ENCODE measurements at regions of chr6 and their contacts with region 1.

Region 1: GRCh38 chr6:90478789-90479602 is 107.9 kb downstream of the MAP3K7 start:
- DNase-seq: peak; percentile 90 to 95 (median 91)
- ATAC-seq: peak; percentile 99
- H3K4me3 ChIP-seq: no peak overlapping the region
- H3K27ac ChIP-seq: peak overlapping the region; percentile 35; the same call in 1 of the 3 replicates
- H3K4me1 ChIP-seq: peaks cover 0 to 13% of the 10 kb centered on the region in 2 experiments; a peak in 4 of 5 replicates
- H3K27me3 ChIP-seq: no peaks in the 10 kb centered on the region; a peak in 1 of 5 replicates
- CTCF ChIP-seq: peak; percentile 86 to 95 (median 92)
- EP300 ChIP-seq: peak; percentile 50; the same call in 1 of the 2 replicates
- POLR2A ChIP-seq: no peak
- RAD21 ChIP-seq: peak; percentile 99

Region 2: GRCh38 chr6:89940225-89941027 is 538.6 kb before region 1 on chr6:
- CTCF ChIA-PET with region 1: interaction called, 6 read pairs
- POLR2A ChIA-PET with region 1: interaction called, 3 read pairs
- in situ Hi-C with region 1: loop called (anchors 5 kb)
- intact Hi-C with region 1: loop called (anchors 1 kb)
- DNase-seq: peak; percentile 54 to 79 (median 64)
- ATAC-seq: peak; percentile 99
- H3K4me3 ChIP-seq: no peak overlapping the region
- H3K27ac ChIP-seq: no peak overlapping the region
- H3K4me1 ChIP-seq: no peaks in the 10 kb centered on the region
- H3K27me3 ChIP-seq: peaks cover 0 to 13% of the 10 kb centered on the region in 2 experiments; a peak in 1 of 5 replicates
- CTCF ChIP-seq: peak; percentile 77 to 86 (median 82)
- EP300 ChIP-seq: 0 out of 2 replicates have a peak, but pooled peaks have one; percentile 16
- POLR2A ChIP-seq: no peak
- RAD21 ChIP-seq: peak; percentile 90 to 96

Region 3: DNA sequence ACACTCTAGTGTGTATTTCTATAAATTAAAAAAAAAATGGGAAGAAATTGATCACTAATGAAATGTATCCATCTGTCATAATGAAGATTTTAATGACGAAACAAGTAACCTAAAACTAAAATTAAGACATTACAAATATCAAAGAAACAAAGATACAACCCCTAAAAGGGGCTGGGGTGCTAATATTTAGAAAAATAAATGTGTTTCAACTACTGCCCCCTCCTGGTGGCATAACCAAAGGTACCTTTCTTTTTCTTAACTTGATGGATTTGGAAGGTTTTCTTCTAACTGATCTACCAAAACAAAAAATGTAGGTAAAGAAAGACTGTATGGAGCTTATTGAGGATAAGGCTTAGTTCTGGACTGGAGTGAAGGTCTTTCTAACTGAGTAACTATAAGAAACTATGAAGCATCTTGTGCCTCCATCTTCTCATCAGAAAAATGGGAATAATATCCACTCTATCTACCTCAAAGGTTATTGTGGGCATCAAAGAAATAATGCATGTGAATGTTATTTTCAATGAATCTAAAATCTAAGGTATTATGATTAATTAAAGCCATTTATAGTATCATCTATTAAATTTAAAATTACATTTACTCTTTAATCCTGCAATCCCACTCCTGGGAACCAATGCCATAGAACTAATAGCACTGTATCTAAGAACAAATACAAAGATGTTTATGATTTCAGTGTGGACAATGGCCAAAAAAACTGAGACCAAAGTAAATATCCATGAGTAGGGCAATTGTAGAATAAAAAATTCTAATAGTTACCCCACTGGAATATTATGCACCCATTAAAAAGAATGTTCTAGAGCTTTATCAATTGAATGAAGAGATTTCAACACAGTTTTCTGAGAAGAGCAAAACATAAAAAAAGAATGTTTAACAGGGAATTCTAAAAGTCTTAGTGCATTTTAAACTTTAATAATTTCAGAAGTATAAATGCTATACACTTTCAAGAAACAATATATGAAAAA is 299.5 kb before region 1 on chr6:
- CTCF ChIA-PET with region 1: no interaction called
- POLR2A ChIA-PET with region 1: interaction called, 3 read pairs
- in situ Hi-C with region 1: no loop called
- intact Hi-C with region 1: loop called (anchors 10 kb)
- DNase-seq: peak in 1 of 4 experiments; percentile 30
- ATAC-seq: no peak
- H3K4me3 ChIP-seq: no peak overlapping the region
- H3K27ac ChIP-seq: no peak overlapping the region
- H3K4me1 ChIP-seq: peaks cover 0 to 9% of the 10 kb centered on the region in 2 experiments; a peak in 2 of 5 replicates
- H3K27me3 ChIP-seq: 0 out of 5 replicates have a peak, but pooled peaks cover 0 to 4% of the 10 kb centered on the region in 2 experiments
- CTCF ChIP-seq: peak; percentile 38 to 41 (median 41); a peak in 3 of 6 replicates
- EP300 ChIP-seq: no peak
- POLR2A ChIP-seq: no peak
- RAD21 ChIP-seq: peak; percentile 48 to 60

Region 4: GRCh38 chr6:90285611-90286381 is 193.2 kb before region 1 on chr6:
- CTCF ChIA-PET with region 1: interaction called, 6 read pairs
- POLR2A ChIA-PET with region 1: interaction called, 3 read pairs
- in situ Hi-C with region 1: loop called (anchors 5 kb)
- intact Hi-C with region 1: loop called (anchors 1 kb)
- DNase-seq: peak; percentile 43 to 90 (median 64)
- ATAC-seq: peak; percentile 97
- H3K4me3 ChIP-seq: no peak overlapping the region
- H3K27ac ChIP-seq: peak overlapping the region; percentile 17; the same call in 1 of the 3 replicates
- H3K4me1 ChIP-seq: peaks cover 3 to 22% of the 10 kb centered on the region in 2 experiments; a peak in 4 of 5 replicates
- H3K27me3 ChIP-seq: no peaks in the 10 kb centered on the region
- CTCF ChIP-seq: no peak
- EP300 ChIP-seq: peak; percentile 46; the same call in 1 of the 2 replicates
- POLR2A ChIP-seq: no peak
- RAD21 ChIP-seq: peak in 1 of 2 experiments; percentile 33; a peak in 2 of 4 replicates

Region 5: GRCh38 chr6:90403489-90404381 is 75.3 kb before region 1 on chr6:
- CTCF ChIA-PET with region 1: no interaction called
- POLR2A ChIA-PET with region 1: interaction called, 3 read pairs
- in situ Hi-C with region 1: loop called (anchors 5 kb)
- intact Hi-C with region 1: loop called (anchors 2 kb)
- DNase-seq: peak; percentile 76 to 93 (median 84)
- ATAC-seq: peak; percentile 96
- H3K4me3 ChIP-seq: no peak overlapping the region
- H3K27ac ChIP-seq: peak overlapping the region; percentile 62
- H3K4me1 ChIP-seq: peaks cover 30 to 40% of the 10 kb centered on the region in 2 experiments; a peak in 4 of 5 replicates
- H3K27me3 ChIP-seq: no peaks in the 10 kb centered on the region
- CTCF ChIP-seq: peak; percentile 9 to 28 (median 17); a peak in 1 of 6 replicates
- EP300 ChIP-seq: peak; percentile 71
- POLR2A ChIP-seq: no peak
- RAD21 ChIP-seq: peak; percentile 21 to 42; a peak in 2 of 4 replicates

Measured in K562 (cell line).